ENCODE measurements at regions of chr19 and their contacts with region 1.

Region 1: GRCh38 chr19:9934132-9934950 is 2.0 kb downstream of the OLFM2 start:
- DNase-seq: peak; percentile 87
- ATAC-seq: peak; percentile 72
- H3K4me3 Mint-ChIP-seq: no peak overlapping the region
- H3K27ac Mint-ChIP-seq: no peak overlapping the region
- H3K4me1 Mint-ChIP-seq: peaks cover 27% of the 10 kb centered on the region
- H3K27me3 Mint-ChIP-seq: peaks cover 41% of the 10 kb centered on the region

Region 2: DNA sequence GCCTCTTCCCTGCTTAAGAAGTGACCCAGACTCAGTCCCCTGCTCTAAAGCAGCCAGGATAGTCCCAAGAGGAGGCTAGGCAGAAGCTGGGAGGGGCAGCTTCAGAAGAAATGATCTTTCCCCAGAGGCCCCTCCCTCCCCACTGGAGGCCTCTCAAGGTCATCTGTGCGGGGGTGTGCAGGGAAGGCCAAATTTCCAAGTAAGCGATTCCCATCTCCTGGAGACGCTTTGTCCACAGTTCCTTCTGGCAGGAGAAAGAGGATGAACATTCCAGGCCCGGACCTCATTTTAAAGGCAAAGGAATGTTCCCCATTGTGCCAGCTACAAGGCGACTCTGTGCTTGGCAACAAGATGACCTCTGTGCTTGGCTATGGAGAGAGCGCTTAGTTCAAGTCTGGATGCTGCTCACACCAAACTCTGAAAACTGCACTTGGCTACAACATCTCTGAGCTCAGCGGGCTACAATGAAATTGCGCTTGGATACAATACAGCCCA is 52.5 kb after region 1 on chr19:
- CTCF ChIA-PET with region 1: no interaction called
- POLR2A ChIA-PET with region 1: no interaction called
- DNase-seq: no peak
- ATAC-seq: no peak
- H3K4me3 Mint-ChIP-seq: no peak overlapping the region
- H3K27ac Mint-ChIP-seq: no peak overlapping the region
- H3K4me1 Mint-ChIP-seq: no peaks in the 10 kb centered on the region
- H3K27me3 Mint-ChIP-seq: peaks cover 5% of the 10 kb centered on the region

Region 3: GRCh38 chr19:10000171-10000826 is 66.0 kb after region 1 on chr19:
- CTCF ChIA-PET with region 1: interaction called, 29 read pairs
- POLR2A ChIA-PET with region 1: no interaction called
- DNase-seq: peak; percentile 73
- ATAC-seq: peak; percentile 60
- H3K4me3 Mint-ChIP-seq: no peak overlapping the region
- H3K27ac Mint-ChIP-seq: no peak overlapping the region
- H3K4me1 Mint-ChIP-seq: peaks cover 11% of the 10 kb centered on the region
- H3K27me3 Mint-ChIP-seq: peaks cover 7% of the 10 kb centered on the region

Region 4: GRCh38 chr19:10027158-10027693 is 92.9 kb after region 1 on chr19:
- CTCF ChIA-PET with region 1: interaction called, 62 read pairs
- POLR2A ChIA-PET with region 1: no interaction called
- DNase-seq: no peak
- ATAC-seq: no peak
- H3K4me3 Mint-ChIP-seq: no peak overlapping the region
- H3K27ac Mint-ChIP-seq: no peak overlapping the region
- H3K4me1 Mint-ChIP-seq: no peaks in the 10 kb centered on the region
- H3K27me3 Mint-ChIP-seq: peaks cover 10% of the 10 kb centered on the region

Region 5: DNA sequence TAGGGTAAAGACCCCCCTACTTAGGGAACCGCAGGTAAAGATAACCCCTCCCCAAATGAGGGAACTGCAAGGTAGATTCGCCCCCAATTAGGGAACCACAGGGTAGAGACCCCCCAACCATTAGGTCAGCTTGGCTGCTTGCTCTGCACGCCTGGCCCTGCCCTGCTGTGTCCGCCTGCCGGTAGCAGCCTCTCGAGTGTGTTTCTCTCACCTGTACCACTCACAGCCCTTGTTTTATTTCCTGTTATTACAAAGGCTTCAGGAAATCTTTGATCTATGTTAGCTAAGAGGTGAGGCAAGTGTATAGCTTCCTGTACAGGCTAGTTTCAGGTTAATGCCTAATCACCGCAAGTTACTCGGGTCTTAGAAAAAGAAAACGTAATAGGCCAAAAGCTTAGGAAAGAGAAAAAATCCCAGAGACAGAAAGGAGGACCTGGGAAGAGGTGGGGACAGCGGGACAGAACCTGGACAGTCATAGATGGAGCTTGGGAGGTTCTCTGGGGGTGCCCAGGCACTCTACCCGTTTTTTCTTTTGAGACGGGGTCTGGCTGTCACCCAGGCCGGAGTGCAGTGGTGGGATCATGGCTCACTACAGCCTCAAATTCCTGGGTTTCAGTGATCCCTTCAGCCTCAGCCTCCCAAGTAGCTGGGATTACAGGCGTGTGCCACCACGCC is 208.5 kb after region 1 on chr19:
- CTCF ChIA-PET with region 1: interaction called, 12 read pairs
- POLR2A ChIA-PET with region 1: no interaction called
- DNase-seq: peak; percentile 69
- ATAC-seq: peak; percentile 89
- H3K4me3 Mint-ChIP-seq: peak overlapping the region; percentile 55
- H3K27ac Mint-ChIP-seq: peak overlapping the region; percentile 90
- H3K4me1 Mint-ChIP-seq: peaks cover 49% of the 10 kb centered on the region
- H3K27me3 Mint-ChIP-seq: no peaks in the 10 kb centered on the region